Activated T-helper 2 cell treated with anti-CD3 and anti-CD28 coated beads, Interferon-gamma antibody, Interleukin-2, Interleukin-4, amounts not matched to agents 10 μg/mL and 5 μg/mL and 100 μg/mL, durations not matched to agents 14 hours and 24 hours and 36 hours (primary cell): ENCODE measurements at regions of chr10 and their contacts with region 1.

Region 1: DNA sequence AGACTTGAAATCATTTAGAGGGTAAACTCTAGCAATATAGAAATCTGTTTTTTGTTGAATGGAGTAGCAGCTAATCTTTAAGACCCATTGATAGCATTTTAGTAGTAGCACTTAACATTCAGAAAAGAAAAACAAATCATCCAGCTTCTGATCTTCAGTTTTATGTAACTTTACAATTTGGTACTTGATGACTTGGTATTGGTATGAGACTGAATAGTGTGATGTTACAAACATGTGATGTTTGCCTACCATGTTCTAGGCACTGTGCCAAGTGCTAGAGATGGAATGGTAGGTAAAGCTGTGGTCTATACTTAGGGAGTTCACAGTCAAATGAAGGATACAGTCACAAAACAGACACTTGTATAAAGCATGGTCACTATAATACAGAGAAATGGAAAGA is 21.3 kb downstream of the ZEB1 start:
- DNase-seq: no peak
- H3K4me3 Mint-ChIP-seq: no peak overlapping the region
- H3K27ac Mint-ChIP-seq: no peak overlapping the region
- H3K4me1 Mint-ChIP-seq: peaks cover 23% of the 10 kb centered on the region
- H3K27me3 Mint-ChIP-seq: no peaks in the 10 kb centered on the region

Region 2: DNA sequence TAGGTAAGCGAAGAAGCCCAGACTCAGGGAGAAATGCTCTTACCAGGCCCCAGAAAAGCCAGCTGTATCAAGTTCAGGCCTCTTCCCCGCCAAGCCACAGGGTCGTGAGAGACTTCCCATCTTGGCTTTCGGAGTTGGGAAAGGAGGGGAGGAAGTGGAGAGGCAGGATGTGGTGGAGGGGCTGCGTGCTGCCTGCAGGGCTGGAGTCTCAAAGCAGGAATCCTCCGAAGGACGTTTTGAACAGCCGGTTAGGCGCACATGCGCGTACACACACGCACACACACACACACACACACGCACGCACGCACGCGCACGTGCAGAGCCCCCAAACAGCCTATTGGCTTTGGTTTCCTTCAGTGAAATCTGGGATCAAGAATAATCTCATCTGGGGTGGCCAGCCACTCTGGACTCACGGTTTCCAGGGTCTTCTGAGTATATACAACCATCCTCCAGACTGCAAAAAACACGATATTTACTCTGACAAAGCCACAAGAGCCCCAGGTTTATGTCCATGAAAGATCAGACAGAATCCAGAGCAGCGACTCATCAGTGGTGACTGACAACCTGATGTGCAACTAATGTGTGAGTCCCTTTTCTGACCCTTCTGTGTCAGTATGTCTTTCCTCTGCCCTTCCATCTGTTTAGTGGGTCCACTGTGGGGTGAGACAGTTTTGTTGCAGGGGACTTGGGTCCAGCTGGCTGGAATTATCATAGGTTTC is 193.7 kb before region 1 on chr10:
- intact Hi-C with region 1: no loop called
- DNase-seq: no peak
- H3K4me3 Mint-ChIP-seq: peak overlapping the region; percentile 66
- H3K27ac Mint-ChIP-seq: peak overlapping the region; percentile 81
- H3K4me1 Mint-ChIP-seq: peaks cover 48% of the 10 kb centered on the region
- H3K27me3 Mint-ChIP-seq: no peaks in the 10 kb centered on the region

Region 3: GRCh38 chr10:31353574-31353973 is 13.2 kb after region 1 on chr10:
- intact Hi-C with region 1: loop called (anchors 1 kb)
- DNase-seq: no peak
- H3K4me3 Mint-ChIP-seq: no peak overlapping the region
- H3K27ac Mint-ChIP-seq: peak overlapping the region; percentile 72
- H3K4me1 Mint-ChIP-seq: peaks cover 46% of the 10 kb centered on the region
- H3K27me3 Mint-ChIP-seq: no peaks in the 10 kb centered on the region